ENCODE measurements at regions of chr9 and their contacts with region 1.

Region 1: GRCh38 chr9:94213511-94214124 is 45.5 kb upstream of the ZNF169 start:
- DNase-seq: peak; percentile 64 to 69
- H3K4me3 ChIP-seq: no peak overlapping the region
- H3K4me3 Mint-ChIP-seq: no peak overlapping the region
- H3K27ac Mint-ChIP-seq: no peak overlapping the region
- H3K4me1 ChIP-seq: no peaks in the 10 kb centered on the region
- H3K4me1 Mint-ChIP-seq: no peaks in the 10 kb centered on the region
- H3K27me3 ChIP-seq: no peaks in the 10 kb centered on the region
- H3K27me3 Mint-ChIP-seq: peaks cover 3% of the 10 kb centered on the region
- CTCF ChIP-seq: peak; percentile 42 to 60

Region 2: GRCh38 chr9:94065535-94065961 is 148.1 kb before region 1 on chr9:
- CTCF ChIA-PET with region 1: interaction called, 6 read pairs
- POLR2A ChIA-PET with region 1: no interaction called
- intact Hi-C with region 1: loop called (anchors 1 kb)
- DNase-seq: peak; percentile 53
- H3K4me3 ChIP-seq: no peak overlapping the region
- H3K4me3 Mint-ChIP-seq: no peak overlapping the region
- H3K27ac Mint-ChIP-seq: no peak overlapping the region
- H3K4me1 ChIP-seq: no peaks in the 10 kb centered on the region
- H3K4me1 Mint-ChIP-seq: peaks cover 7% of the 10 kb centered on the region
- H3K27me3 ChIP-seq: no peaks in the 10 kb centered on the region
- H3K27me3 Mint-ChIP-seq: no peaks in the 10 kb centered on the region
- CTCF ChIP-seq: peak; percentile 39 to 69

Region 3: DNA sequence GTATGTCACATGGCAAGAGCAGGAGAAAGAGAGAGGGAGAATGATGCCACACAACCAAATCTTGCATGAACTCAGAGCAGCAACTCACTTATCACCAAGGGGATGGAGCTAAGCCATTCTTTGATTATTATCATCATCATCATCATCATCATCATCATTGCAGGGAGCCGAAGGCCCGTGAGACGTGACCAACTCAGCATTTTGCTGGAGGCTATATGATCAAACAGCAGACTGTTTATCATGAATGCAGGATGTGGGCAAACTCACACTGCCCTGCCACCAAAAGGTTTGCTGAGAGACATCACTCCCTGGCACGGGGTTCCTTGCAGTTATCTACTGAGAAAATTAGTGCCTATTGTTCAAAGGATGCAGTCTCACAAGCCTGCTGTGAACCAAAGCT is 36.8 kb after region 1 on chr9:
- CTCF ChIA-PET with region 1: no interaction called
- POLR2A ChIA-PET with region 1: no interaction called
- intact Hi-C with region 1: no loop called
- DNase-seq: no peak
- H3K4me3 ChIP-seq: no peak overlapping the region
- H3K4me3 Mint-ChIP-seq: no peak overlapping the region
- H3K27ac Mint-ChIP-seq: no peak overlapping the region
- H3K4me1 ChIP-seq: no peaks in the 10 kb centered on the region
- H3K4me1 Mint-ChIP-seq: no peaks in the 10 kb centered on the region
- H3K27me3 ChIP-seq: no peaks in the 10 kb centered on the region
- H3K27me3 Mint-ChIP-seq: no peaks in the 10 kb centered on the region
- CTCF ChIP-seq: no peak

Measured in Caco-2 (cell line).